ENCODE measurements at regions of chr6 and their contacts with region 1.

Region 1: DNA sequence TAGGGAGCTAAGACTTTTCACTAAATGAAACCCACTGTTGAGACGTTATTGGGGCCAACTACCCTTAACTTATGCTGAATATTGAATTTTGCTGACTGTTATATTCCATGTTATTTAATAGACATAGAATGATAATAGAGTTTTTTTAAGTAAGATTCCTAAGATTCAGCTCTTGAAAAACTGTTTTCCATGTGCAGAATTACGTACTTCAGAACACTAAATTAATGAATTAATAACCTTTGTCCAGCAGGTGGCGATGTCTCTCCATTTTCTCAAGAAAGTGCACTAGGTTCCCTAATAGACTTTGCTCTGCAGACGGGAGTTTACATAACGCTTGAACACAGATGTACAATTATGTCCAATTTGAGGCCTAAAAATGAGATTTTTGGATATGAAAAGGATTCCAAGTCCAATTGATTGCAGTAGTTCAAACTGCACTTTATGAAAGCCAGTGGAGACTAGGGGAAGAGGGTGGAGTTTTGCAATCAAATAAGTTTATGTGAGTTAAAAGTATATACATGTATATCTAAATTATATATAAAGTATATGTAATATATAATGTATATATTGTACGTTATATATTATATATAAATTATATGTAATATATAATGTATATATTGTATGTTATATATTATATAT is 282.1 kb downstream of the UST start:
- DNase-seq: peak; percentile 72
- ATAC-seq: no peak
- H3K4me3 ChIP-seq: no peak overlapping the region
- H3K27ac ChIP-seq: no peak overlapping the region
- H3K4me1 ChIP-seq: peaks cover 8% of the 10 kb centered on the region
- H3K27me3 ChIP-seq: no peaks in the 10 kb centered on the region
- CTCF ChIP-seq: peak; percentile 40 to 79 (median 53); a peak in 5 of 6 replicates
- EP300 ChIP-seq: no peak
- POLR2A ChIP-seq: no peak
- RAD21 ChIP-seq: peak; percentile 91

Region 2: GRCh38 chr6:148578245-148578732 is 450.6 kb before region 1 on chr6:
- CTCF ChIA-PET with region 1: interaction called, 30 read pairs
- POLR2A ChIA-PET with region 1: interaction called, 3 read pairs
- RAD21 ChIA-PET with region 1: interaction called, 9 read pairs
- SMC1A ChIA-PET with region 1: interaction called, 28 read pairs
- in situ Hi-C with region 1: no loop called
- intact Hi-C with region 1: loop called (anchors 1 kb)
- DNase-seq: no peak
- ATAC-seq: peak; percentile 100
- H3K4me3 ChIP-seq: no peak overlapping the region
- H3K27ac ChIP-seq: no peak overlapping the region
- H3K4me1 ChIP-seq: no peaks in the 10 kb centered on the region
- H3K27me3 ChIP-seq: peaks cover 0 to 2% of the 10 kb centered on the region in 2 experiments; a peak in 2 of 4 replicates
- CTCF ChIP-seq: peak; percentile 96 to 99 (median 98); a peak in 5 of 6 replicates
- EP300 ChIP-seq: no peak
- POLR2A ChIP-seq: no peak
- RAD21 ChIP-seq: peak; percentile 99

Region 3: GRCh38 chr6:148967541-148967956 is 61.3 kb before region 1 on chr6:
- CTCF ChIA-PET with region 1: no interaction called
- POLR2A ChIA-PET with region 1: no interaction called
- RAD21 ChIA-PET with region 1: no interaction called
- SMC1A ChIA-PET with region 1: no interaction called
- in situ Hi-C with region 1: no loop called
- intact Hi-C with region 1: no loop called
- DNase-seq: no peak
- ATAC-seq: no peak
- H3K4me3 ChIP-seq: no peak overlapping the region
- H3K27ac ChIP-seq: no peak overlapping the region
- H3K4me1 ChIP-seq: no peaks in the 10 kb centered on the region
- H3K27me3 ChIP-seq: peaks cover 0 to 2% of the 10 kb centered on the region in 2 experiments; a peak in 1 of 4 replicates
- CTCF ChIP-seq: no peak
- EP300 ChIP-seq: no peak
- POLR2A ChIP-seq: no peak
- RAD21 ChIP-seq: no peak

Region 4: GRCh38 chr6:149054559-149055194 is 25.8 kb after region 1 on chr6:
- CTCF ChIA-PET with region 1: interaction called, 228 read pairs
- POLR2A ChIA-PET with region 1: interaction called, 262 read pairs
- RAD21 ChIA-PET with region 1: interaction called, 521 read pairs
- SMC1A ChIA-PET with region 1: interaction called, 1,060 read pairs
- in situ Hi-C with region 1: no loop called
- intact Hi-C with region 1: loop called (anchors 1 kb)
- DNase-seq: peak; percentile 86
- ATAC-seq: peak; percentile 85
- H3K4me3 ChIP-seq: peak overlapping the region; percentile 53; the same call in 1 of the 2 replicates
- H3K27ac ChIP-seq: peak overlapping the region; percentile 90
- H3K4me1 ChIP-seq: peaks cover 37% of the 10 kb centered on the region
- H3K27me3 ChIP-seq: no peaks in the 10 kb centered on the region
- CTCF ChIP-seq: no peak
- EP300 ChIP-seq: no peak
- POLR2A ChIP-seq: no peak
- RAD21 ChIP-seq: no peak

Region 5: GRCh38 chr6:149075616-149076364 is 46.9 kb after region 1 on chr6:
- CTCF ChIA-PET with region 1: interaction called, 14 read pairs
- POLR2A ChIA-PET with region 1: interaction called, 222 read pairs
- RAD21 ChIA-PET with region 1: interaction called, 20 read pairs
- SMC1A ChIA-PET with region 1: interaction called, 1,060 read pairs
- in situ Hi-C with region 1: no loop called
- intact Hi-C with region 1: no loop called
- DNase-seq: no peak
- ATAC-seq: no peak
- H3K4me3 ChIP-seq: no peak overlapping the region
- H3K27ac ChIP-seq: no peak overlapping the region
- H3K4me1 ChIP-seq: peaks cover 31% of the 10 kb centered on the region
- H3K27me3 ChIP-seq: no peaks in the 10 kb centered on the region
- CTCF ChIP-seq: no peak
- EP300 ChIP-seq: no peak
- POLR2A ChIP-seq: no peak
- RAD21 ChIP-seq: no peak

Region 6: GRCh38 chr6:149140137-149140909 is 111.4 kb after region 1 on chr6:
- CTCF ChIA-PET with region 1: no interaction called
- POLR2A ChIA-PET with region 1: no interaction called
- RAD21 ChIA-PET with region 1: interaction called, 13 read pairs
- SMC1A ChIA-PET with region 1: interaction called, 3 read pairs
- in situ Hi-C with region 1: no loop called
- intact Hi-C with region 1: loop called (anchors 2 kb)
- DNase-seq: peak; percentile 65
- ATAC-seq: peak; percentile 94
- H3K4me3 ChIP-seq: peak overlapping the region; percentile 17; the same call in 1 of the 2 replicates
- H3K27ac ChIP-seq: peak overlapping the region; percentile 98
- H3K4me1 ChIP-seq: peaks cover 25% of the 10 kb centered on the region
- H3K27me3 ChIP-seq: no peaks in the 10 kb centered on the region
- CTCF ChIP-seq: no peak
- EP300 ChIP-seq: peak; percentile 80 to 84; a peak in 3 of 4 replicates
- POLR2A ChIP-seq: peak; percentile 72
- RAD21 ChIP-seq: peak; percentile 16; the same call in 1 of the 2 replicates

Region 7: GRCh38 chr6:149324428-149324827 is 295.5 kb after region 1 on chr6:
- CTCF ChIA-PET with region 1: interaction called, 5 read pairs
- POLR2A ChIA-PET with region 1: interaction called, 3 read pairs
- RAD21 ChIA-PET with region 1: interaction called, 14 read pairs
- SMC1A ChIA-PET with region 1: interaction called, 5 read pairs
- in situ Hi-C with region 1: no loop called
- intact Hi-C with region 1: loop called (anchors 5 kb)
- DNase-seq: no peak
- ATAC-seq: peak; percentile 28; the same call in 2 of the 3 replicates
- H3K4me3 ChIP-seq: no peak overlapping the region
- H3K27ac ChIP-seq: no peak overlapping the region
- H3K4me1 ChIP-seq: peaks cover 10% of the 10 kb centered on the region
- H3K27me3 ChIP-seq: no peaks in the 10 kb centered on the region
- CTCF ChIP-seq: no peak
- EP300 ChIP-seq: no peak
- POLR2A ChIP-seq: no peak
- RAD21 ChIP-seq: no peak

Region 8: DNA sequence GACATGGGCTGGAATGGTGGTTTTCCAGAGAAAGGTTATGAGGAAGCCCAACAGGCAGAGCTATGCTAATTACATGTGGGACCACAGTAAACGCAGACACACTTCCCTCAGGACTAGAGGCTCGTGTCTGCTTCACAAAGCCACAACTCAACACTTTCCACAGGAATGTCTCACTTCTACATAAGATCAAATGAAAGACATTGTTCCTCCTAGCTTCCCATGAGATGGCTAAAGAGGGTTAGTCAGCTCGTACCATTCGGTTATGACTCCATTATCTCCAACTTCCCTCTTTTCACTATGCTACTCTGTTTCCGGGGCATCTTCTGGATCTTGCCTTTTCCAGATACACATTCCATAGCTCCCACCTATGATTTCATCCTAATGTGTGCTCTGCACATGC is 485.0 kb after region 1 on chr6:
- CTCF ChIA-PET with region 1: interaction called, 13 read pairs
- POLR2A ChIA-PET with region 1: interaction called, 3 read pairs
- RAD21 ChIA-PET with region 1: interaction called, 23 read pairs
- SMC1A ChIA-PET with region 1: interaction called, 9 read pairs
- in situ Hi-C with region 1: no loop called
- intact Hi-C with region 1: loop called (anchors 1 kb)
- DNase-seq: no peak
- ATAC-seq: no peak
- H3K4me3 ChIP-seq: no peak overlapping the region
- H3K27ac ChIP-seq: no peak overlapping the region
- H3K4me1 ChIP-seq: no peaks in the 10 kb centered on the region
- H3K27me3 ChIP-seq: no peaks in the 10 kb centered on the region
- CTCF ChIP-seq: no peak
- EP300 ChIP-seq: no peak
- POLR2A ChIP-seq: no peak
- RAD21 ChIP-seq: no peak